ENCODE measurements at regions of chr5 and their contacts with region 1.

Region 1: DNA sequence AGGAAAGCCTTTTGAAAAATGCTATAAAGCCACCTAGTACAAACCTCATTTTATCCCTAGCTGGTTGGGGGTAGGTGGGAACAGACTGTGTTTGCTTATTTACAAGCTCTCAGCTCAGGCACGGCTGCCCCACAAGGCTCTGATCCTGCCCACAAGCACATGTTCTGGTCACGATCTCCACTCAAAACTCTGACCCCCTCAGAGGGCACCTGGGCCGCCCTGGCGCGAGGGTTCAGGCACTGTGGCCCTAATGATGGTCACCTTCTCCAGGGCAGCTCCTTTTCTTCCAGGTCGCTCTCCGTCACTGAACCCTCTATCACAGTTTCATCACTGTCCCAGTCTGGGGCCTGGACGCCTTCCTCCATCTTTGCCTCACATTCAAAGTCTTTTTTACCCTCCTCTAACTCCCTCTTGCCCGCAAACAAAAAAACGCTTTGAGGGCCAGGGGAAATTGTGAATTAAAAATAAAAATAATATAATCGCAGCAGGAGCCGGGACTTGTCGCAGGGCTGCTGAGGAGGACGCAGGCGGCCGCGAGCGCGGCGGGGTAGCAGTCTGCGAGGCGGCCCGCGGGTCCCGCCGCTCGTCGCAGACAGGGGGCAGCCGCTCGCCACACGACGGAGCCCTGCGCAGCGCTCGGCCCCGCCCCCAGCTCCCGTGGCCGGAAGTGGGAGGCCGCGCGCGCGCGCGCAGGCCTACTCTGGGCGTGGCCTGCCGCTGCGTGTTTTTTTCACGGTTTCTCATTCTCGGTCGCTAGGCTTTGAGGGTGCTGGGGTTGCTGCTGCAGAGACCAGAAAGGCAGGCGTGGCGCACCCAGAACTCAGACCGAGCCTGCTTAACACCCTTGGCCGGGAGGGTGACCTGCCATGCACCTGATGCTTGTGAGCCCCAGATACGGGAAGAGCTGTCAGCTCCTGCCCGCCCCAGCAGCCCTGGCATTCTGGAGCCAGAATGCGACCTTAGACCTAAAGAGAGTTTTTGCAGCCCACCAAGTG is at the start of gene ANKRD31:
- DNase-seq: peak; percentile 94
- total RNA-seq, gene ANKRD31: 0.13 TPM

Region 2: GRCh38 chr5:75281716-75282465 is 45.3 kb after region 1 on chr5:
- intact Hi-C with region 1: no loop called
- DNase-seq: no peak

Region 3: GRCh38 chr5:75336625-75337339 is 100.2 kb after region 1 on chr5 and contains the start of gene HMGCR:
- intact Hi-C with region 1: loop called (anchors 5 kb)
- DNase-seq: peak; percentile 100
- total RNA-seq, gene HMGCR: 12.6 TPM

Region 4: GRCh38 chr5:75678155-75678554 is 441.5 kb after region 1 on chr5:
- intact Hi-C with region 1: loop called (anchors 2 kb)
- DNase-seq: no peak

Region 5: DNA sequence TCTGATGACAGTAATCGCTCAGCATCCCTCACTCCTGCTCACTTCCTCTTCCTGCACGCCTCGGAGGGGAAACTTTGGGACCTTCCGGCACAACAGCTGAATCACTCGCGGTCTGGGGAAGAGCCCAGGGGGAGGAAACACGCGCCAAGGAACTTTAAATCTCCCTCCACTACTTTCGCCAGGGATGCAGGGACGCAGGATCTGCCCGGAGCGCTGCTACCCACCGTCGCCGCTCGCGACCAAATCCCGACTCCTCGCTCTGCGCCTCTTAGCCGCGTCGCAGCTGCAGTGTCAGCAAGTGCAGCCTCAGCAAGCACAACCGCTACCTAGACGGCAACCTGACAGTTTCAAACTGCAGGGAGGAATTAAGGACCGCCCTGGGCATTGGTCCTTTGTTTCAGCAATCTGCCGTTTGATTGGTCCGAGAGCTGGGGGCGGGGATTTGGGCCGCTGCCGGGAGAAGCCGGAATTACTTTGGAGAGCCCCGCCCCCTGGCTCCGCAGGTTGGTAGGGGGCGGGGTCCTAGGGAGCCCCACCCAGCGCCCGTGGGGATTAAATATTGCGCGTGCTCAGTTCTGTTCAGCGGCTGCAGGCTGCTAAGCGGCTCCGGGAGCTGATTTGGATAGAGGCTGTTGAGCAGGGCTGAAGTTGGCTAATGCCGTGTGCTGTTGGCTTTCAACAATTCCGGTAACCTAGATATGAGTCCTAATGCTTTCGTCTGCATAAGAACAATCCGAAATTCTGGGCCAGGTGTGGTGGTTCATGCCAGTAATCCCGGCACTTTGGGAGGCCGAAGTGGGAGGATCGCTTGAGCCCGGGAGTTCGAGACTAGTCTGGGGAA is 480.7 kb after region 1 on chr5 and contains the start of gene POC5:
- intact Hi-C with region 1: loop called (anchors 10 kb)
- DNase-seq: peak; percentile 96
- total RNA-seq, gene POC5: 3.8 TPM